ENCODE measurements at regions of chr19 and their contacts with region 1.

Region 1: DNA sequence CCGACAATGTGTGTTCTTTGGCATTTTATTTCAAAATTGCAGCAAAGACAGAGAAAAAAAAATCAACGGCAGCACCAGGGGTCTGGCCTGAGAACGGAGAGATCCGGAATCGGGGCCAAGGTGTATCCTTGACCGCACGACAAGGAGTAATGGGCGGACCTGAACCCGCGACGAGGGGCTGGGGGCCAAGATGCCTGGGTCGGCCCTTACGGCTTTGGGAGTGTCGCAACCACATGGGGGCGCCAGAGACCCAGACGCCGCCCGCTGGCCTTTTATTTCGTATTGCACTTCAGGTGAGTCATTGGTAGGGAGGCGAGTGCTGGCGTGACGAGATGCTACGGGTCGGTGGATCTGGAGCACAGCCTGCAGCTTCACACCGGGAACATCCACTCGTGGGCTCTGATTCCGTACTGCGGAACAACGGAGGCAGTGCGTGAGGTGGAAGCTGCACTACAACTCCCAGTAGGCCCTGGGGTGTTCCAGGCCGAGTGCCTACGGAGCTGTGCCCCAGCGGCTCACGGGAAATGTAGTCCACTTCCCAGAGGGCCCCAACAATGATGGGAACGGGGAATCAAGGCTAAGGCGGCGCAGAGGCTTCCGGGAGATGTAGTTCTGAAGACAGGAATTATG is 15.7 kb downstream of the BCAT2 start:
- DNase-seq: peak; percentile 90 to 94 (median 94)
- ATAC-seq: peak; percentile 96 to 99 (median 98)
- H3K4me3 ChIP-seq: peak overlapping the region; percentile 46 to 64 (median 57)
- H3K27ac ChIP-seq: peak overlapping the region; percentile 56 to 69 (median 61)
- H3K4me1 ChIP-seq: peaks cover 0 to 16% (median 5%) of the 10 kb centered on the region in 4 donors
- H3K27me3 ChIP-seq: no peaks in the 10 kb centered on the region
- CTCF ChIP-seq: peak; percentile 96 to 99 (median 98)
- POLR2A ChIP-seq: no peak

Region 2: GRCh38 chr19:48835734-48836088 is 40.5 kb after region 1 on chr19:
- intact Hi-C with region 1: loop called (anchors 5 kb)
- DNase-seq: peak; percentile 93 to 95 (median 94)
- ATAC-seq: peak; percentile 90 to 96 (median 92)
- H3K4me3 ChIP-seq: peak overlapping the region; percentile 36 to 62 (median 49)
- H3K27ac ChIP-seq: peak overlapping the region; percentile 82 to 89 (median 89)
- H3K4me1 ChIP-seq: peaks cover 0 to 12% (median 0%) of the 10 kb centered on the region in 4 donors
- H3K27me3 ChIP-seq: no peaks in the 10 kb centered on the region
- CTCF ChIP-seq: peak; percentile 91 to 94 (median 92)
- POLR2A ChIP-seq: no peak

Region 3: GRCh38 chr19:49331616-49332055 is 536.5 kb after region 1 on chr19:
- intact Hi-C with region 1: no loop called
- DNase-seq: peak; percentile 59 to 84 (median 79)
- ATAC-seq: peak; percentile 89 to 93 (median 92)
- H3K4me3 ChIP-seq: peak overlapping the region in 1 of 3 donors; percentile 23
- H3K27ac ChIP-seq: peak overlapping the region in 1 of 3 donors; percentile 33
- H3K4me1 ChIP-seq: peaks cover 0 to 14% (median 3%) of the 10 kb centered on the region in 4 donors
- H3K27me3 ChIP-seq: no peaks in the 10 kb centered on the region
- CTCF ChIP-seq: no peak
- POLR2A ChIP-seq: no peak